Activated B cell treated with CpG ODN at 0.5 μM for 24 hours (primary cell): ENCODE measurements at regions of chr6 and their contacts with region 1.

Region 1: GRCh38 chr6:2579241-2579761 is 171.4 kb downstream of the MYLK4 start:
- DNase-seq: no peak
- ATAC-seq: no peak
- H3K4me3 Mint-ChIP-seq: no peak overlapping the region
- H3K27ac Mint-ChIP-seq: no peak overlapping the region
- H3K4me1 Mint-ChIP-seq: no peaks in the 10 kb centered on the region
- H3K27me3 Mint-ChIP-seq: peaks cover 17% of the 10 kb centered on the region
- CTCF ChIP-seq: no peak

Region 2: GRCh38 chr6:2566048-2566447 is 13.3 kb before region 1 on chr6:
- CTCF ChIA-PET with region 1: no interaction called
- POLR2A ChIA-PET with region 1: no interaction called
- intact Hi-C with region 1: loop called (anchors 1 kb)
- DNase-seq: no peak
- ATAC-seq: no peak
- H3K4me3 Mint-ChIP-seq: no peak overlapping the region
- H3K27ac Mint-ChIP-seq: no peak overlapping the region
- H3K4me1 Mint-ChIP-seq: peaks cover 3% of the 10 kb centered on the region
- H3K27me3 Mint-ChIP-seq: peaks cover 1% of the 10 kb centered on the region
- CTCF ChIP-seq: no peak